ENCODE measurements at regions of chr7 and their contacts with region 1.

Region 1: GRCh38 chr7:99419323-99420021 is 10.7 kb downstream of the BUD31 start:
- DNase-seq: no peak
- ATAC-seq: no peak
- H3K4me3 ChIP-seq: no peak overlapping the region
- H3K27ac ChIP-seq: no peak overlapping the region
- H3K4me1 ChIP-seq: no peaks in the 10 kb centered on the region
- H3K27me3 ChIP-seq: no peaks in the 10 kb centered on the region

Region 2: GRCh38 chr7:99364961-99365817 is 54.3 kb before region 1 on chr7:
- intact Hi-C with region 1: loop called in 1 of 2 experiments (anchors 5 kb)
- DNase-seq: peak in 1 of 2 donors; percentile 77
- ATAC-seq: no peak
- H3K4me3 ChIP-seq: no peak overlapping the region
- H3K27ac ChIP-seq: no peak overlapping the region
- H3K4me1 ChIP-seq: no peaks in the 10 kb centered on the region
- H3K27me3 ChIP-seq: no peaks in the 10 kb centered on the region